ENCODE measurements at regions of chr6 and their contacts with region 1.

Region 1: GRCh38 chr6:90230548-90231215 is 66.0 kb downstream of the BACH2 start:
- DNase-seq: no peak
- H3K4me3 Mint-ChIP-seq: peak overlapping the region; percentile 10
- H3K27ac Mint-ChIP-seq: peak overlapping the region; percentile 31
- H3K4me1 Mint-ChIP-seq: peaks cover 89% of the 10 kb centered on the region
- H3K27me3 Mint-ChIP-seq: no peaks in the 10 kb centered on the region

Region 2: DNA sequence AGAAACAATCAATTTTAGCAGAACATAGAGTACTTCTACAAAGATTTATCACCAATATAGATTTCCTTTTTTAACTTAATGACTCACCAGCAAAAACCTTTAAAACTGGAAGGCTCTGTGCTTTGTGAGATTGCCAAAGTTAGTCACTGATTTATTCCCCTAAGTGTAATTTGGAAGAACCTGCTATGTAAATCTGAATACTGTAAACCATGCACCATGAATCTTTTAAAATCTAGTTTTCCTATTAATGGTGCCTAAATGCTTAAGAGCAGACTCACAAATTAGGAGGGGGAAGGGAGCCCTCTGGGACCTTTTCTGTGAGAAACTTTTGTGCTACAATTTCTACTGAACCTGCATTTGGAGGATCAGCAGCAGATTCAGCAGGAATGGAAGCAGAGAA is 1207.9 kb before region 1 on chr6:
- intact Hi-C with region 1: no loop called
- DNase-seq: no peak
- H3K4me3 Mint-ChIP-seq: no peak overlapping the region
- H3K27ac Mint-ChIP-seq: no peak overlapping the region
- H3K4me1 Mint-ChIP-seq: no peaks in the 10 kb centered on the region
- H3K27me3 Mint-ChIP-seq: peaks cover 4% of the 10 kb centered on the region

Region 3: GRCh38 chr6:90202156-90202555 is 28.5 kb before region 1 on chr6:
- intact Hi-C with region 1: loop called (anchors 1 kb)
- DNase-seq: no peak
- H3K4me3 Mint-ChIP-seq: peak overlapping the region; percentile 71
- H3K27ac Mint-ChIP-seq: peak overlapping the region; percentile 85
- H3K4me1 Mint-ChIP-seq: peaks cover 43% of the 10 kb centered on the region
- H3K27me3 Mint-ChIP-seq: no peaks in the 10 kb centered on the region

Region 4: GRCh38 chr6:90241229-90241880 is 10.7 kb after region 1 on chr6:
- intact Hi-C with region 1: loop called (anchors 1 kb)
- DNase-seq: no peak
- H3K4me3 Mint-ChIP-seq: no peak overlapping the region
- H3K27ac Mint-ChIP-seq: no peak overlapping the region
- H3K4me1 Mint-ChIP-seq: peaks cover 63% of the 10 kb centered on the region
- H3K27me3 Mint-ChIP-seq: no peaks in the 10 kb centered on the region

Region 5: DNA sequence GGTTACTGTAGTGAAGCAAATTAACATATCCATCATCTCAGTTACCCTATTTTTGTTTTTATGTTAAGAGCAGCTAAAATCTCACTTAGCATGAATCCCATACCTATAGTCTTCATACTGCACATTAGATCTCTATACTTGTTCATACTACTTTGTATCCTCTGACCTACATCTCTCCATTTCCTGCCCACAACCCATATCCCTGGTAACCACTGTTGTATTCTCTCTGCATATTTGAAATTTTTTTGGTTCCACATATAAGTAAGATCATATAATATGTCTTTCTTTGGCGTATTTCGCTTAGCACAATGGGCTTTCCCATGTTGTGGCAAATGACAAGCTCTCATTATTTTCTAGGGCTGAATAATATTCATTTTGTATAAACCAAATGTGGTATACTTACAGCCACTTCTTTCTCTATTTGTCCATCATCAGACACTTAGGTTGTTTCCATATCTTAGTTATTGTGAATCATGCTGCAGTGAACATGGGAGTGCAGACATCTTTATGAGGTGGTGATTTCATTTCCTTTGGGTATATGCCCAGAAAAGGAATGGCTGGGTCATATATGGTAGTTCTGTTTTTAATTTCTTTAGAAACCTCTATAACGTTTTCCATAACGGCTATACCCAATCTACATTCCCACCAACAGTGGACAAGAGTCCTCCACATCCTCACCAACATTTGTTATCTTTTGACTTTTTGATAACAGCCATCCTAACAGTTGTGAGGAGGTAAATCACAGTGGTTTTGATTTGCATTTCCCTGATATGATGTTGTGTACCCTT is 26.2 kb after region 1 on chr6:
- intact Hi-C with region 1: loop called (anchors 1 kb)
- DNase-seq: peak; percentile 27
- H3K4me3 Mint-ChIP-seq: peak overlapping the region; percentile 0
- H3K27ac Mint-ChIP-seq: peak overlapping the region; percentile 87
- H3K4me1 Mint-ChIP-seq: peaks cover 78% of the 10 kb centered on the region
- H3K27me3 Mint-ChIP-seq: no peaks in the 10 kb centered on the region

Measured in activated T-helper 1 cell treated with anti-CD3 and anti-CD28 coated beads, Interleukin-12 subunit alpha, Interleukin-12 subunit beta, Interleukin-2, Interleukin-4 antibody, amounts not matched to agents 30 ng/mL and 10 ng/mL and 1 ng/mL, durations not matched to agents 14 hours and 24 hours and 36 hours (primary cell).